Right cardiac atrium (tissue), 5 donors: ENCODE measurements at regions of chr6 and their contacts with region 1.

Region 1: GRCh38 chr6:13908955-13909381 is 15.8 kb upstream of the RNF182 start:
- DNase-seq: peak in 2 of 3 donors; percentile 27 to 56
- ATAC-seq: peak; percentile 60 to 64
- H3K4me3 ChIP-seq: no peak overlapping the region
- H3K27ac ChIP-seq: no peak overlapping the region
- H3K4me1 ChIP-seq: no peaks in the 10 kb centered on the region
- H3K27me3 ChIP-seq: no peaks in the 10 kb centered on the region

Region 2: DNA sequence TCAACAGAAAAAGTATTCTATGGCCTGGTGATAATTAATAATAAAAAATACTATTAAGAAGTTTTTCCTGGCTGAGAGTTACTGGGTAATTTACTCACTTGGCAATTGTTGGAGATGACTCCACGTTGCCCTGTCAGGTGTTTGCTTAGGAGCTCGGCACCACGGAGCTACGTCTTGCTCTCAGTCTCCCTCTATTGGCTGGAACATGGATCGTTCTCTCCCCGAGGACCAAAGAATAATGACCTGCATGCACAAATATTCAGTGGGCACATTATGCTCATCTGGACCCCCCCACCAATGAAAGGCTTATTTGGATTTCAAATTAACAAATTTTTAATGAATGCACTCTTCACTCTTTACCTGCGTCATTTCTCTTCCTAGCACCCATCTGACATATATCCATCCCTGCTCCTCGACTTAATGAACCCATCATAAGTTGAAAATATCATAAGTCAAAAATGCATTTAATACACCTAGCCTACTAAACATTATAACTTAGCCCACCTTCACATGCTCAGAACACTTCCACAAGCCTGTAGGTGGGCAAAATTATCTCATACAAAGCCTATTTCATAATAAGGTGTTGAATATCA is 137.6 kb after region 1 on chr6:
- intact Hi-C with region 1: loop called in 2 of 4 experiments (anchors 5 to 10 kb)
- DNase-seq: no peak
- ATAC-seq: no peak
- H3K4me3 ChIP-seq: no peak overlapping the region
- H3K27ac ChIP-seq: no peak overlapping the region
- H3K4me1 ChIP-seq: no peaks in the 10 kb centered on the region
- H3K27me3 ChIP-seq: no peaks in the 10 kb centered on the region

Region 3: GRCh38 chr6:14066782-14067406 is 157.9 kb after region 1 on chr6:
- intact Hi-C with region 1: loop called in 3 of 4 experiments (anchors 5 kb)
- DNase-seq: no peak
- ATAC-seq: peak; percentile 59 to 83
- H3K4me3 ChIP-seq: no peak overlapping the region
- H3K27ac ChIP-seq: no peak overlapping the region
- H3K4me1 ChIP-seq: no peaks in the 10 kb centered on the region
- H3K27me3 ChIP-seq: no peaks in the 10 kb centered on the region

Region 4: GRCh38 chr6:14144678-14145113 is 235.7 kb after region 1 on chr6:
- intact Hi-C with region 1: loop called in 2 of 4 experiments (anchors 5 to 10 kb)
- DNase-seq: peak; percentile 63 to 83 (median 75)
- ATAC-seq: peak; percentile 59 to 87
- H3K4me3 ChIP-seq: no peak overlapping the region
- H3K27ac ChIP-seq: no peak overlapping the region
- H3K4me1 ChIP-seq: no peaks in the 10 kb centered on the region
- H3K27me3 ChIP-seq: no peaks in the 10 kb centered on the region